Activated CD8-positive, alpha-beta T cell treated with anti-CD3 and anti-CD28 coated beads, Interleukin-2, amount 10 ng/mL, durations not matched to agents 7 days and 5 days (primary cell): ENCODE measurements at regions of chr11 and their contacts with region 1.

Region 1: DNA sequence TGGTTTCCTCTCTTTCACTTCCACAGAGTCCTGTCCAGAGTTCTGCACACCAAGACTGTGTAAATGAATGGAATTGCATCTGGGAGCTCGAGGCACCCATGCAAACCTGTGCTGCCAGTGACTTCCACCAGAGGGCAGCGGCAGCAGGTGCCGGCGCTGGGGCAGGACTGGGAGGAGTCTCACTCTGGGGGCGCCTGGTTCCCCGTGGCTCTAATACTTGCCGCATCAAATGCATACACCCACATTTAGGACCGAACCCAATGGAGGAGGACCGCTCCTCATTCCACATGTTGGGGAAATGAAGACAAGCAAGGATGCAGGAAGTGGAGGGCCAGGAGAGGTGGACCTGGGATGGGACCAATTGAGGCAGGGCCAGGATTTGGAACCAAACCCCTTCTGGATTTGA is 1.1 kb upstream of the CD6 start:
- DNase-seq: peak; percentile 87
- ATAC-seq: peak; percentile 54
- H3K4me3 Mint-ChIP-seq: peak overlapping the region; percentile 3
- H3K27ac Mint-ChIP-seq: peak overlapping the region; percentile 47
- H3K4me1 Mint-ChIP-seq: peaks cover 29% of the 10 kb centered on the region
- H3K27me3 Mint-ChIP-seq: peaks cover 9% of the 10 kb centered on the region

Region 2: GRCh38 chr11:60739114-60739513 is 231.3 kb before region 1 on chr11:
- CTCF ChIA-PET with region 1: no interaction called
- POLR2A ChIA-PET with region 1: no interaction called
- DNase-seq: no peak
- ATAC-seq: no peak
- H3K4me3 Mint-ChIP-seq: no peak overlapping the region
- H3K27ac Mint-ChIP-seq: no peak overlapping the region
- H3K4me1 Mint-ChIP-seq: no peaks in the 10 kb centered on the region
- H3K27me3 Mint-ChIP-seq: peaks cover 11% of the 10 kb centered on the region

Region 3: GRCh38 chr11:60953771-60954170 is 16.6 kb before region 1 on chr11:
- CTCF ChIA-PET with region 1: interaction called, 14 read pairs
- POLR2A ChIA-PET with region 1: interaction called, 4 read pairs
- DNase-seq: no peak
- ATAC-seq: no peak
- H3K4me3 Mint-ChIP-seq: no peak overlapping the region
- H3K27ac Mint-ChIP-seq: no peak overlapping the region
- H3K4me1 Mint-ChIP-seq: peaks cover 21% of the 10 kb centered on the region
- H3K27me3 Mint-ChIP-seq: peaks cover 27% of the 10 kb centered on the region

Region 4: DNA sequence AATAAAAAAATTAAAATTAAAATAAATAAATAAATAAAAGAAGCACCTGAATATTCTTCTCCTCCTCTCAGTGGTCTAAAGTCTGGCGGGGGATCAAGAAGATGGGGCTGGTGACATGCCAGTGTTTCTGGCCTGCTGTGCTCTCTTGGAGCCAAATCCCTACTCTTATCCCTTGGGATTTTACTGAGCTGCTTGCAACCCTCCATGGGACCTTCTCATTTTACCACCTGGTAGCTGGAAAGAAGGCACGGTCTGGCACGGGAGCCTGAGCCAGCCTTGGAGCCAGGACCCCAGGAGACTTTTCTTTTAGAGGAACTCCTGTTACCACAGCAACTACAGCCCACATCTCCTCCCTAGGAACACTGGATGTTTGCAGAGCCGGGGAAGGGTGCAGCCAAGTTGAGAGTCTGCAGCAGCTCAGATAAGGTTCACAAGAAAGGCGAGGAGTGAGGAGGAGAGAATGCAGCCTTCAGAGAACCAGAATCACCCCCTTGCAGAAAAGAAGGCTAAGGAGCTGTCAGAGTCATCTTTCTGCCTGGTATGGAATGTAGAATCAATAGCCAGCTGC is 22.6 kb after region 1 on chr11:
- CTCF ChIA-PET with region 1: interaction called, 10 read pairs
- POLR2A ChIA-PET with region 1: interaction called, 6 read pairs
- DNase-seq: no peak
- ATAC-seq: no peak
- H3K4me3 Mint-ChIP-seq: no peak overlapping the region
- H3K27ac Mint-ChIP-seq: peak overlapping the region; percentile 64
- H3K4me1 Mint-ChIP-seq: peaks cover 70% of the 10 kb centered on the region
- H3K27me3 Mint-ChIP-seq: no peaks in the 10 kb centered on the region

Region 5: GRCh38 chr11:61028272-61028761 is 57.9 kb after region 1 on chr11:
- CTCF ChIA-PET with region 1: interaction called, 11 read pairs
- POLR2A ChIA-PET with region 1: no interaction called
- DNase-seq: peak; percentile 66
- ATAC-seq: peak; percentile 32
- H3K4me3 Mint-ChIP-seq: peak overlapping the region; percentile 76
- H3K27ac Mint-ChIP-seq: peak overlapping the region; percentile 96
- H3K4me1 Mint-ChIP-seq: peaks cover 72% of the 10 kb centered on the region
- H3K27me3 Mint-ChIP-seq: no peaks in the 10 kb centered on the region

Region 6: DNA sequence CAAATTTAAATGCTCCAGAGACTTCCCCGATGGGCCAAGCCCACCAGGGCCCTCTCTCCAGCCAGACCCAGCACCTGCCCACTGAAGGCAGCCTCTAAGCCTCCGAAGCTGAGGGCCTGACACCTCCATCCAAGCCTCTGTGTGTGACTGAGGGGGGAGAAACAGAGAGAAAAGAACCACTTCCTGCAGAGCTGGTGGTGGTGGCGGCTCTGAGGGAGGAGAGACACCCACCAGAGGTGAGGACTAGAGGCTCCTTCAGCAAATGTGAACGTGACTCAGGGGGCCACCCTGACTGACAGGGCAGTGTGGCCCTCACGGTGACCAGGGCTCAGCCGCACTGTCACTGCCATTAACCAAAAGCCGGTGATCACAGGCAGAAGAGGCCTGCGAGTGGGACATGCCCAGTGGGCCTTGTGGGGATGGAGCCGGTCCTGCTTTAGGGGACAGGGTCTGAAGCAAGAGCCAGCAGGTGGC is 100.9 kb after region 1 on chr11:
- CTCF ChIA-PET with region 1: interaction called, 17 read pairs
- POLR2A ChIA-PET with region 1: interaction called, 9 read pairs
- DNase-seq: peak; percentile 87
- ATAC-seq: peak; percentile 97
- H3K4me3 Mint-ChIP-seq: peak overlapping the region; percentile 66
- H3K27ac Mint-ChIP-seq: peak overlapping the region; percentile 97
- H3K4me1 Mint-ChIP-seq: peaks cover 83% of the 10 kb centered on the region
- H3K27me3 Mint-ChIP-seq: no peaks in the 10 kb centered on the region

Region 7: DNA sequence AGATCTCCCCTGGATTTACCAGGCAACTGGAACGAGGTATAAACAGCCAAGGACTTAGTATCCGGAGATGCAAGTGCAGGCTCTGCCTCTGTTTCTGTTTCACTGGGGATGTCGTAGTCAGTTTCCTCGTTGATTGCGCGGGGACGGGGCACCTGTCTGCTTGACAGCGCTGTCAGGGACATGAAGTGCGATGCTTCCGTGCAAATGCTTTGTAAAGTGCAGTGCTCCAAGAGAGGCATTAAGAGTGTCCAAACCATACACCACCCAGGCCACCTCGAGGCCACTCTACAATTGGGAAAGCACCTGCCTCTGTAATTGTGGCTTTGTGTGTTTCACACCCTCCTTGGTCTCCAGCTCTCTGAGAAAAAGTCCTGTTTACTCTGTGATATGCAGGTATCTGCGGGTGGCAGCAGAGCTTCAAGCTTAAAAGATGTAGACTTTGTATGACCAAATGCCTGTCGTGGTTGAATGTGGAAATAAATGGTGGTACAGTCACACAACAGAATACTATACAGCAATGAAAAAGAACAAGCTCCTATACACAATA is 113.3 kb after region 1 on chr11:
- CTCF ChIA-PET with region 1: interaction called, 18 read pairs
- POLR2A ChIA-PET with region 1: interaction called, 3 read pairs
- DNase-seq: peak; percentile 78
- ATAC-seq: peak; percentile 60
- H3K4me3 Mint-ChIP-seq: peak overlapping the region; percentile 71
- H3K27ac Mint-ChIP-seq: peak overlapping the region; percentile 96
- H3K4me1 Mint-ChIP-seq: peaks cover 53% of the 10 kb centered on the region
- H3K27me3 Mint-ChIP-seq: no peaks in the 10 kb centered on the region

Region 8: GRCh38 chr11:61187505-61188130 is 217.2 kb after region 1 on chr11:
- CTCF ChIA-PET with region 1: interaction called, 25 read pairs
- POLR2A ChIA-PET with region 1: no interaction called
- DNase-seq: peak; percentile 87
- ATAC-seq: peak; percentile 87
- H3K4me3 Mint-ChIP-seq: no peak overlapping the region
- H3K27ac Mint-ChIP-seq: no peak overlapping the region
- H3K4me1 Mint-ChIP-seq: peaks cover 3% of the 10 kb centered on the region
- H3K27me3 Mint-ChIP-seq: peaks cover 4% of the 10 kb centered on the region